Caco-2 (cell line): ENCODE measurements at regions of chr19 and their contacts with region 1.

Region 1: GRCh38 chr19:4723367-4724187 is at the start of gene DPP9:
- DNase-seq: peak; percentile 97
- H3K4me3 ChIP-seq: peak within 1 kb of the TSS; percentile 99
- H3K4me3 Mint-ChIP-seq: peak within 1 kb of the TSS; percentile 98
- H3K27ac Mint-ChIP-seq: peak within 1 kb of the TSS; percentile 86
- H3K4me1 ChIP-seq: 0 out of 2 replicates have a peak, but pooled peaks cover 5% of the 10 kb centered on the region
- H3K4me1 Mint-ChIP-seq: peaks cover 15% of the 10 kb centered on the region
- H3K27me3 ChIP-seq: no peaks in the 10 kb centered on the region
- H3K27me3 Mint-ChIP-seq: no peaks in the 10 kb centered on the region
- CTCF ChIP-seq: peak; percentile 20 to 24
- total RNA-seq, gene DPP9: 63.2 and 71.4 TPM in 2 replicates

Region 2: DNA sequence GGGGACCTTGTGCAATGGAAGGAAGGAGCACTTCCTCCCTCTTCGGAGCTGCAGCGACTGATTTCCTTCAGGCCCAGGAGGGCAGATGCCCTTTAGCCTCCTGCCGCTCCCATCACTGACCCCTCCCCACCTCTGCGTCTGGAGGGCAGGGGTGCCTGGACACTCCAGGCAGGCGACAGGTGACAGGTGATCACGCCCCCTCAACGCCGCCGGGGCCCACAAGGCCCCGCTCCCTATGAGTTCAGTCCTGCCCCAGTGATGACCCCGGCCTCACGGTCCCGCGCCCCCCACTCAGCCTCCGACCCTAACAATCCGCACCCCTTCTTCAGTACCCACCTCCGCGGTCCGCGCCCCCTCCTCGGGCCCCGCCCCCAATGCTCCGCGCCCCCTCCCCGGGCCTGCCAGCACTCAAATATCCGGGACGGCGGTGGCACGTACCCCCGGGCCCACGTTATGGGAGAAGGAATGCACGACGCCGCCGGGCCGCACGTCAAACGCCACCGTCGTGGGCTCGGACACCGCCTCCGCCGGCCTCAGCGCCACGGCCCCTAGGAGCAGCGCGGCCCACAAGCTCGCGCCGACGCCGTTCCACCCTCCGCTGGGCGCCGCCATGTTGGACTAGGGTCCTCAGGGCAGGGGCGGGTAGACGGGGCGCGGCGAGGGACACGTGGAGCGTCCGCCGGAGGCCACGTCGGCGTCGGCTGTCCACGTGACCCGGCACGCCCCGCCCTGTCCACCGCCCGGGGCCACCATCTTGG is 53.7 kb before region 1 on chr19 and contains the start of gene MYDGF:
- CTCF ChIA-PET with region 1: no interaction called
- POLR2A ChIA-PET with region 1: no interaction called
- intact Hi-C with region 1: loop called (anchors 5 kb)
- DNase-seq: peak; percentile 92 to 93
- H3K4me3 ChIP-seq: peak within 1 kb of the TSS; percentile 94
- H3K4me3 Mint-ChIP-seq: peak within 1 kb of the TSS; percentile 80
- H3K27ac Mint-ChIP-seq: peak within 1 kb of the TSS; percentile 85
- H3K4me1 ChIP-seq: peaks cover 14% of the 10 kb centered on the region
- H3K4me1 Mint-ChIP-seq: no peaks in the 10 kb centered on the region
- H3K27me3 ChIP-seq: no peaks in the 10 kb centered on the region
- H3K27me3 Mint-ChIP-seq: no peaks in the 10 kb centered on the region
- CTCF ChIP-seq: no peak
- total RNA-seq, gene MYDGF: 106 and 109 TPM in 2 replicates

Region 3: GRCh38 chr19:4694209-4694987 is 29.2 kb before region 1 on chr19:
- CTCF ChIA-PET with region 1: no interaction called
- POLR2A ChIA-PET with region 1: no interaction called
- intact Hi-C with region 1: no loop called
- DNase-seq: no peak
- H3K4me3 ChIP-seq: no peak overlapping the region
- H3K4me3 Mint-ChIP-seq: no peak overlapping the region
- H3K27ac Mint-ChIP-seq: no peak overlapping the region
- H3K4me1 ChIP-seq: no peaks in the 10 kb centered on the region
- H3K4me1 Mint-ChIP-seq: no peaks in the 10 kb centered on the region
- H3K27me3 ChIP-seq: no peaks in the 10 kb centered on the region
- H3K27me3 Mint-ChIP-seq: no peaks in the 10 kb centered on the region
- CTCF ChIP-seq: no peak